ENCODE measurements at regions of chr17 and their contacts with region 1.

Region 1: DNA sequence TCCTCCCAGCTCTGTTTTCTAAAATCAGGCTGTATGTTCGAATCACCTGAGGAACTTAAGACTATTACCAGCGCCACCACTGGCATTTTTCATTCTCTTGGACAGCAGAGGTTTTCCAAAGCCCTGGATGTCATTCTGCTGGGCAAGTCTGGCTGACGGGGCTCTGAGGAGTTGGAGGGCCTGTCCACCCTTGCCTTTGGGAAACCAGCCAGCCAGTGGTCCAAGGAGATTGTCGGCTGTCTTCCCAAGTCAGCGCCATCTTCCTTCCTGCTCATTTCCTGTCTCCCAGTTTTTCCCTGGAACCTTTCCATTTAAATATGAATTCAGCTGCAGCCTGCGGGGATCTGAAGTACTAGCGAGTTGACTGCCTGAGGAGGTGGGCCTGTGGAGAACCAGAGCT is 258.3 kb downstream of the PRKCA start:
- DNase-seq: no peak
- H3K4me3 ChIP-seq: no peak overlapping the region
- H3K27ac ChIP-seq: no peak overlapping the region
- H3K4me1 ChIP-seq: no peaks in the 10 kb centered on the region
- H3K27me3 ChIP-seq: no peaks in the 10 kb centered on the region
- CTCF ChIP-seq: no peak

Region 2: GRCh38 chr17:66395961-66396360 is 164.7 kb before region 1 on chr17:
- CTCF ChIA-PET with region 1: no interaction called
- POLR2A ChIA-PET with region 1: interaction called, 12 read pairs
- intact Hi-C with region 1: no loop called
- DNase-seq: no peak
- H3K4me3 ChIP-seq: no peak overlapping the region
- H3K27ac ChIP-seq: no peak overlapping the region
- H3K4me1 ChIP-seq: no peaks in the 10 kb centered on the region
- H3K27me3 ChIP-seq: no peaks in the 10 kb centered on the region
- CTCF ChIP-seq: no peak